ENCODE measurements at regions of chr2 and their contacts with region 1.

Region 1: DNA sequence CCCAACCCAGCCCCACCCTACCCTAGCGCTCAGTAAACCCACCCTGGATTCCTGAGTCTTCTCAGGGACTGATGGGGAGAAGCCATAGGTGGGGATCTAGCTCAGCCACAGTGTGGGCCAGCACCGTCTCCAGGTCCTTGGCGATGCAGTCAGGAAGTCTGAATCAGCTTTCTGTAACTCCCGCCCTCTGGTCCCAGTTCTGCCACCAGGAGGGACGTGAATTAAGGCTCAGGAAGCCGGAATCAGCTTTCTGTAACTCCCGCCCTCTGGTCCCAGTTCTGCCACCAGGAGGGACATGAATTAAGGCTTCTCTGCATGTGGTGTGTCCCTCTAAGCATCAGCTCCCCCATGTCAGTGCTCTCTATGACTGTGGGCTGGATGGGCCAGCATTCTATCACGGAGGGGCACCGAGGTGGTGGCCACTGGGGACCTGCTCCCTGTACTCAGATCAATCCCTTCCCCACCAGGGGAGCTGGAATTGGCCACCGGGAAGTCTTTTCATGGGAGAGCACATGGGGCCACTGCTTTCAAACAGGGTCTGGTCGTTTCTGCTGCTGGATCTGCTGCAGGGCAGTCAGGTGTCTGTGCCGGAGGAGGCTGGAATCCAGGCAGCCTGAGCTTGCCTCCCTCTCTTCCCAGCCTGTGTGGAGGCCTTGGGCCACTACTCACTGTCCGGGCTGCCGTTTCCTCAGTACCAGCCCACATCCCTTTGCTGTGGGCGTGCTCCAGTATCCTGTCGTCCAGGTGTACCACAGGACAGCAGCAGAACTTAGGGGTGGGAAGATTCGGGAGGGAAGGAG is 24.7 kb downstream of the ASB18 start:
- DNase-seq: peak; percentile 49 to 94
- H3K4me3 ChIP-seq: no peak overlapping the region
- H3K27ac ChIP-seq: no peak overlapping the region
- H3K4me1 ChIP-seq: peaks cover 5% of the 10 kb centered on the region
- H3K27me3 ChIP-seq: no peaks in the 10 kb centered on the region
- CTCF ChIP-seq: no peak
- POLR2A ChIP-seq: no peak

Region 2: GRCh38 chr2:236085647-236086046 is 153.8 kb before region 1 on chr2:
- intact Hi-C with region 1: no loop called
- DNase-seq: no peak
- H3K4me3 ChIP-seq: no peak overlapping the region
- H3K27ac ChIP-seq: no peak overlapping the region
- H3K4me1 ChIP-seq: no peaks in the 10 kb centered on the region
- H3K27me3 ChIP-seq: no peaks in the 10 kb centered on the region
- CTCF ChIP-seq: no peak
- POLR2A ChIP-seq: no peak

Region 3: DNA sequence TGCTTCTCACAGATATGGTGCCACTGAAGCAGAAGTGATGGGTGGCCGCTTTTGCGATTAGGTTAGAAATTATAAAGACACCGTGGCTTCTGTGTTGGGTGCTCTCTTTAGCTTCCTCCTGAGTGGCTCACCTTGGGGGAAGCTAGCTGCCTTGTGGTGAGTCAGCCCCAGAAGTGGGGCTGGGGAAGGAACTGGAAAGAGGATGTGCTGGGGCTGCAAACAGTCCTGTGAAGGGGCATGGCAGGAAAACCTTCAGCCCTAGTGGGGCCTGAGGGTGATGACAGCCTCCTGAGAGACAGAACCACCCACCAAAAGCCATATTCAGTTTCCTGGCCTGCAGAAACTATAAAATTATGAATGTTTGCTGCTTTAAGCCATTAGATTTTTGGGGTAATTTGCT is 33.6 kb after region 1 on chr2:
- intact Hi-C with region 1: loop called (anchors 1 kb)
- DNase-seq: peak; percentile 22 to 84
- H3K4me3 ChIP-seq: no peak overlapping the region
- H3K27ac ChIP-seq: no peak overlapping the region
- H3K4me1 ChIP-seq: no peaks in the 10 kb centered on the region
- H3K27me3 ChIP-seq: no peaks in the 10 kb centered on the region
- CTCF ChIP-seq: no peak
- POLR2A ChIP-seq: no peak

Region 4: GRCh38 chr2:236352761-236353593 is 113.5 kb after region 1 on chr2:
- intact Hi-C with region 1: no loop called
- DNase-seq: peak in 1 of 2 donors; percentile 77
- H3K4me3 ChIP-seq: no peak overlapping the region
- H3K27ac ChIP-seq: no peak overlapping the region
- H3K4me1 ChIP-seq: no peaks in the 10 kb centered on the region
- H3K27me3 ChIP-seq: no peaks in the 10 kb centered on the region
- CTCF ChIP-seq: peak; percentile 74 to 89 (median 88)
- POLR2A ChIP-seq: no peak

Measured in vagina (tissue), 2 donors.